ENCODE measurements at regions of chr5 and their contacts with region 1.

Region 1: DNA sequence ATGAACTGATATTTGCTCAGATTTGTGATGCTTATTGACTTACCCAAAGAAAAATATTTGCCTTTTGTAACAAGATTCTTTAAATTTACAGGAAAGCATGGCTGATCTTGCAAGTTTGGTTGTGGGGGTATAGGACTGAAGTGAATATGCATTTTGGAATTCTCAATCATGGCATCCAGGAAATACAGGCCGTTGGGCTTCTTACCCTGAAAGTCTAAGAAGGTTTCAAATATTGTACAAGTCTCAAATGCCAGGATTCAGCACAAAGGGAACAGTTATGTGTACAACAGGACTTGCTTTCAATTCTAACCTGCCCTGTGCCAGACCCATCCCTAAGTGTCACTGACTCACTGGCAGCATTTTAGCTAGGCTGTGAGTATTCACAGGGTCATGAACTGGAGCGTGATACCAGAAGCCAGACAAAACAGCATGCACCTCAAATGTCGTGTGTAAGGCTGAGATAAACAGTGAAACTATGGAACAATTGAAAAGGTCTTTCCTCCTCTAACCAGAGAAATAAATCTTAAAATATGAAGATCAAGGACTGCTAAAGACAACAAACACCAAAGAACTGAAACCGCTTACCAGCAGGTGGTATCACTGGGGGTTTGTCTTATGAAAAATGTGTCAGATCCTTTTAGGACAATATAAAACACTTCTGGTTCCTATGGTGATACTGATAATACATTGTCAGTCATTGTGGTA is 168.6 kb upstream of the RGMB start:
- DNase-seq: no peak
- ATAC-seq: no peak
- H3K4me3 ChIP-seq: no peak overlapping the region
- H3K27ac ChIP-seq: no peak overlapping the region
- H3K4me1 ChIP-seq: no peaks in the 10 kb centered on the region
- H3K27me3 ChIP-seq: no peaks in the 10 kb centered on the region
- CTCF ChIP-seq: no peak

Region 2: GRCh38 chr5:98627121-98627520 is 22.2 kb after region 1 on chr5:
- intact Hi-C with region 1: loop called in 1 of 10 experiments (anchors 2 kb)
- DNase-seq: no peak
- ATAC-seq: no peak
- H3K4me3 ChIP-seq: no peak overlapping the region
- H3K27ac ChIP-seq: no peak overlapping the region
- H3K4me1 ChIP-seq: no peaks in the 10 kb centered on the region
- H3K27me3 ChIP-seq: peaks cover 0 to 4% (median 0%) of the 10 kb centered on the region in 7 donors
- CTCF ChIP-seq: no peak

Region 3: DNA sequence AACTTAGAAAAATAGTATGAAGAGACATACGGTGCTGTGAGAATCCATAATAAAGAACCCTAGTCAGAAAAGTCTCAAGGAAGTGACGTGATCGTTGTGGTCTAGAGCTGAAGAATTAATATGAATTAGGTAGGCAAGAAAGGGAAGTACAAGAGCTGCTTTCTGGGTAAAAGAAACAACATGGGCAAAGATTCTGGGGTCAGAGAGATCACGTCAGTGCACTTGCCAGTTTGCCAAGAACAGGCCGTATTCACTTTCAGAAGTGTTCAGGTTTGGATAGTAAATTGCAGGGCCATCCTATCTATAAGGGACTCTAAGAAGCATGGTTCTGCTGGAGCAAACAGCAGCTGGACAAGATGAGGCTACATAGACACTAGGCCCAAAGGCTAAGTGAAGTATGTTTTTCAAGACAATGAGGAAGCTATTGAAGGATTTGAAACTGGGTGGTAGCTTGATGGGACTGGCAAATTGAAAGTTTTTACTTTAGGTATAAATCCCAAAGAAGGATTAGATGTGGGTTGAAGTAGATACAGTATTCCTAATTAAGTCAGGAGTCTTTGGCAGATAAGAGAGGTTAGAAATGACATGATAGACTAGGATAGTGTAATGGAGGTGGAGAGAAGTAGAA is 328.7 kb after region 1 on chr5:
- intact Hi-C with region 1: no loop called
- DNase-seq: no peak
- ATAC-seq: no peak
- H3K4me3 ChIP-seq: no peak overlapping the region
- H3K27ac ChIP-seq: peak overlapping the region in 7 of 10 donors; percentile 1 to 77 (median 30)
- H3K4me1 ChIP-seq: peaks cover 7 to 77% (median 53%) of the 10 kb centered on the region in 9 donors
- H3K27me3 ChIP-seq: no peaks in the 10 kb centered on the region
- CTCF ChIP-seq: no peak

Region 4: DNA sequence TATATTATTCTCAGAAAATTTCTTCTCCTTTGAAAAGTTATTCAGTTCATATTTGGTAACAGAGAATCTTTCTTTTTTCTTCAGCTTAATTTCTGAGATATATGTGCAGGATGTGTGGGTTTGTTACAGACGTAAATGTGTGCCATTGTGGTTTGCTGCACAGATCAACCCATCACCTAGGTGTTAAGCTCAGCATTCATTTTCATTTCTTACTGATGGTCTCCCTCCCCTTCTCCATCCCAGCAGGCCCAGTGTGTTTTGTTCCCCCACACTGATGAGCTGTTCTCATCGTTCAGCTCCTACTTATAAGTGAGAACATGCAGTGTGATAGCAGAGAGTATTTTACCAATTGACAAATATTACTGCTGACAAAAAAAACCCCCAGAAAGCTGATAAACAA is 653.9 kb after region 1 on chr5:
- intact Hi-C with region 1: no loop called
- DNase-seq: no peak
- ATAC-seq: no peak
- H3K4me3 ChIP-seq: no peak overlapping the region
- H3K27ac ChIP-seq: no peak overlapping the region
- H3K4me1 ChIP-seq: no peaks in the 10 kb centered on the region
- H3K27me3 ChIP-seq: no peaks in the 10 kb centered on the region
- CTCF ChIP-seq: no peak